ENCODE measurements at regions of chr1 and their contacts with region 1.

Region 1: DNA sequence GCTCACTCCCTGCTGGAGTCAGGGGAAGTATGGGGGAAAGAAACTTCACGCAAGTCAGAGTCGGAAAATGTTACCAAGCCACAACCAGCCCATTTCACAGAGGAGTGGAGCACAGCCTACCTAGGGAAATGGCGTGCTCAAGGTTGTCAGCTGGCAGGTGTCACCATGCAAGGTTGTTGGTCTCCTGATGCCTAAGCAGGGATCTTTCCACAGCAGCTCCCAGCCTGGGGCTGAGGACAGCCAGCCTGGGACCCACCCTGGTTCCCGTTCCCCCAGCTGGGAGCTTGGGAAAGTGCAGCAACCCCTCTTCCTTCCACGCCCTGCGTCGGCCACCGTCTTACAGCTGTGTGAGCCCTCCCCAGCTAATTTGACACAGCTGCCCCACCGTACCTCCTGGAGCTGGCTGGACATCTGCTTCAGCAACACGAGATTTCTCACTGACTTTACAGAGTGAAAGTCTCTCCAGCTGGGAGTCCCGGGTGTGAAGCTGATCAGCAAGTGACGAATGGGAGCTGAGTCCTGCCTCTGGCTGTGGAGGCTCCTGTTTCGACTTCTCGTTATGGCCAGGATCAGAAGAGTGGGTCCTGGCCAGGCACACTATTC is 224.6 kb upstream of the RAB4A start:
- DNase-seq: no peak
- ATAC-seq: no peak
- H3K4me3 Mint-ChIP-seq: no peak overlapping the region
- H3K27ac Mint-ChIP-seq: no peak overlapping the region
- H3K4me1 Mint-ChIP-seq: peaks cover 5% of the 10 kb centered on the region
- H3K27me3 Mint-ChIP-seq: no peaks in the 10 kb centered on the region

Region 2: DNA sequence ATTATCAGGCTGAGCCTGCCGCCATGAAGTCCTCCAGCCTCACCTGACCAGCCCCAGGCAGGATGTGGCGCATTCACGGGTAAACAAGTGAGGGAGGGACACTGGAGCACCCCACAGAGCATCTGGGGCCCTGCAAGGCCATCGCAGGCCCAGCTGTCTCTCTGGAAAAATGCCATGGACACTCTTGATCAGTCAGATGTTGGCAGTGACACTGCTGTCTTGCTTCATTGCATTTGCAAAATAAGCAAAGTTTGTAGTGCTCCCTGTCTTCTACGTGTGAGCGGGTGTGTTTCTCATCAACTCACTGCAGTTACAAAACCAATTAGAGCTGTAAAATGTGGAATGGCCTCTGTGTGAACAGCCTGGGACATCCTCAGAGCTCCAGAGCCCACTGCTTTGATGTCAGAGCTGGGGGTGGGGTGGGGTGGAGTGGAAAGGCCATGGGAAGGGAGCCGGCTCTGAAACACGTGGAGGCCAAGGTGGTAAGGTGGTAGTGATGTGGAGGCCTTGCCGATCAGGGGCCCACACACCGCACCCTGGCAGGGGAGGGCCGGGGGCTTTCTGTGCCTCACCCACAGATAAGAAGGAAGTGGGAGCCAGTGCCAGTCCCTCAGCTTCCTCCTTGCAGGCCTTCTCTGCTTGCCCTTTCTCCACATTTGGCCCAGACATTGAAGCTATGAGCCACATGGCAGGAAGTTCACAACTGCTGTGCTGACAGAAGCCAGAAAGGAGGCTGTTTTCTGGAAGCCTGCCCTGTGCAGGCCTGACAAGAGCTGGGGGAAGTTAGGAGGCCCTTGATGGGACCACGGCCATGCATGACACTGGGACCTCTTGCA is 56.1 kb before region 1 on chr1:
- CTCF ChIA-PET with region 1: no interaction called
- POLR2A ChIA-PET with region 1: no interaction called
- intact Hi-C with region 1: loop called in 1 of 2 experiments (anchors 10 kb)
- DNase-seq: no peak
- ATAC-seq: no peak
- H3K4me3 Mint-ChIP-seq: no peak overlapping the region
- H3K27ac Mint-ChIP-seq: no peak overlapping the region
- H3K4me1 Mint-ChIP-seq: peaks cover 3% of the 10 kb centered on the region
- H3K27me3 Mint-ChIP-seq: no peaks in the 10 kb centered on the region

Region 3: GRCh38 chr1:229085291-229085690 is 38.9 kb after region 1 on chr1:
- CTCF ChIA-PET with region 1: no interaction called
- POLR2A ChIA-PET with region 1: no interaction called
- intact Hi-C with region 1: loop called in 1 of 2 experiments (anchors 1 kb)
- DNase-seq: no peak
- ATAC-seq: no peak
- H3K4me3 Mint-ChIP-seq: no peak overlapping the region
- H3K27ac Mint-ChIP-seq: no peak overlapping the region
- H3K4me1 Mint-ChIP-seq: no peaks in the 10 kb centered on the region
- H3K27me3 Mint-ChIP-seq: peaks cover 2% of the 10 kb centered on the region